ENCODE measurements at regions of chr5 and their contacts with region 1.

Region 1: GRCh38 chr5:131634996-131635754 is at the start of gene RAPGEF6:
- DNase-seq: peak; percentile 84 to 99 (median 97)
- ATAC-seq: peak; percentile 91
- H3K4me3 ChIP-seq: peak within 1 kb of the TSS; percentile 95
- H3K4me3 Mint-ChIP-seq: peak within 1 kb of the TSS in 5 of 10 donors; percentile 95 to 99 (median 97)
- H3K27ac ChIP-seq: peak within 1 kb of the TSS; percentile 98
- H3K27ac Mint-ChIP-seq: peak within 1 kb of the TSS; percentile 88 to 100 (median 99)
- H3K4me1 ChIP-seq: peaks cover 43 to 49% of the 10 kb centered on the region in 2 donors
- H3K4me1 Mint-ChIP-seq: peaks cover 16 to 44% (median 31%) of the 10 kb centered on the region in 7 donors
- H3K27me3 ChIP-seq: no peaks in the 10 kb centered on the region
- H3K27me3 Mint-ChIP-seq: peaks cover 0 to 3% (median 0%) of the 10 kb centered on the region in 5 donors
- total RNA-seq, gene RAPGEF6: 50.9 to 186 (median 114) TPM

Region 2: GRCh38 chr5:131165119-131165727 is 470.0 kb before region 1 on chr5 and contains the start of gene HINT1:
- CTCF ChIA-PET with region 1: no interaction called
- POLR2A ChIA-PET with region 1: no interaction called
- intact Hi-C with region 1: loop called (anchors 1 kb)
- DNase-seq: peak; percentile 86 to 98 (median 93)
- ATAC-seq: peak; percentile 89
- H3K4me3 ChIP-seq: peak within 1 kb of the TSS; percentile 97
- H3K4me3 Mint-ChIP-seq: peak within 1 kb of the TSS; percentile 93 to 98 (median 97)
- H3K27ac ChIP-seq: peak within 1 kb of the TSS; percentile 91
- H3K27ac Mint-ChIP-seq: peak within 1 kb of the TSS; percentile 95 to 99 (median 98)
- H3K4me1 ChIP-seq: peaks cover 15 to 23% of the 10 kb centered on the region in 2 donors
- H3K4me1 Mint-ChIP-seq: peaks cover 28 to 74% (median 61%) of the 10 kb centered on the region in 7 donors
- H3K27me3 ChIP-seq: no peaks in the 10 kb centered on the region
- H3K27me3 Mint-ChIP-seq: no peaks in the 10 kb centered on the region
- total RNA-seq, gene HINT1: 172 to 319 (median 233) TPM

Region 3: DNA sequence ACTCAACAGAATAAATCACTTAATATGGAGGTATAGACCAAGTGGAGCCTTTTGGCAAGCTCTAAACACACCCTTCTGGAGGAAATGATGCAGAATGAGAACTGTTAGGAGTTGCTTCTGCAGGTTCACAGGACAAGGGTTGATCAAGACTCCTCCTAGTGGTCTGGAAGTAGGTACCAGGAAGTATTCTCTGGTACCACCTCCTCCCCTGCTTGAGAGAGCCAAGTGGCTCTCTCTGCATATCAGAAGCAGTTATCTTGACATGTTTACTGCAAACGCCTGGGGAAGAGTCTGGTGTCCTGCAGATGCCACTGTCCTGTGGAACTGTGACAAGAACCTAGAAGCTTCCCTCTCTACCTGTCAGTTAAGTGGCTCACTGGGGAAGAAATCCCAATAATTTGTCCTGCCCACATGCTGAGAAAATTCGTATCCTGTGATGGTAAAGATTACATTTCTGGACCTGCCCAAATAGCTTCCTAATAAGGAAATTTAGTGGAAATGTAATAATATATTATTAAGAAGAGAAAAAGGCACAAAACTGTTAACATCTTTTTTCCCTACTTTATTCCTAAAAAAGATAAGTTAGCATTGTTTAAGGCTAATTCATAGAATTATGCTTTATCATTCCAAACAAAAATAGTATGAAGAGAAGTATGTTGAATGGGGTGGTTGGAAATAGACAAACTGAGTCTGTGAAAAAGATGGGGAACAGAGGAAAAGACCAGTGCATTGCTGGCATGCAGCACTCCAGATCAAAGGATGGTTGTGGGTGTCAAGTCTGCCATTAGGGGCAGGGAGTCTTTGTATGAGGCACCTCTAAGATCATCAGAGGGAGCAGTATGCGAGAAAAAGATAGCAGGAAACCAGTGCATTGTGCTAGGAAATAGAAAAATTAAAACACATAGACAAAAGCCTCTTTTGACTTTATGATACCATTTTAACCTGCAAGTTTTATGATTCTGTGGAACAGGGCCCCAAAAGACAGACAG is 252.5 kb before region 1 on chr5:
- CTCF ChIA-PET with region 1: no interaction called
- POLR2A ChIA-PET with region 1: no interaction called
- intact Hi-C with region 1: loop called in 1 of 2 experiments (anchors 5 kb)
- DNase-seq: peak in 8 of 9 donors; percentile 43 to 88 (median 82)
- ATAC-seq: peak; percentile 81
- H3K4me3 ChIP-seq: no peak overlapping the region
- H3K4me3 Mint-ChIP-seq: peak overlapping the region; percentile 40 to 86 (median 72)
- H3K27ac ChIP-seq: peak overlapping the region; percentile 97
- H3K27ac Mint-ChIP-seq: peak overlapping the region; percentile 94 to 99 (median 98)
- H3K4me1 ChIP-seq: peaks cover 74 to 76% of the 10 kb centered on the region in 2 donors
- H3K4me1 Mint-ChIP-seq: peaks cover 41 to 100% (median 92%) of the 10 kb centered on the region in 7 donors
- H3K27me3 ChIP-seq: no peaks in the 10 kb centered on the region
- H3K27me3 Mint-ChIP-seq: no peaks in the 10 kb centered on the region

Region 4: GRCh38 chr5:131589510-131590348 is 45.4 kb before region 1 on chr5:
- CTCF ChIA-PET with region 1: interaction called, 5 read pairs
- POLR2A ChIA-PET with region 1: interaction called, 11 read pairs
- intact Hi-C with region 1: loop called (anchors 1 kb)
- DNase-seq: peak in 8 of 9 donors; percentile 8 to 71 (median 62)
- ATAC-seq: peak; percentile 80
- H3K4me3 ChIP-seq: no peak overlapping the region
- H3K4me3 Mint-ChIP-seq: no peak overlapping the region
- H3K27ac ChIP-seq: peak overlapping the region; percentile 9
- H3K27ac Mint-ChIP-seq: peak overlapping the region; percentile 10 to 75 (median 52)
- H3K4me1 ChIP-seq: peaks cover 4 to 5% of the 10 kb centered on the region in 2 donors
- H3K4me1 Mint-ChIP-seq: peaks cover 21 to 63% (median 58%) of the 10 kb centered on the region in 7 donors
- H3K27me3 ChIP-seq: no peaks in the 10 kb centered on the region
- H3K27me3 Mint-ChIP-seq: no peaks in the 10 kb centered on the region

Region 5: DNA sequence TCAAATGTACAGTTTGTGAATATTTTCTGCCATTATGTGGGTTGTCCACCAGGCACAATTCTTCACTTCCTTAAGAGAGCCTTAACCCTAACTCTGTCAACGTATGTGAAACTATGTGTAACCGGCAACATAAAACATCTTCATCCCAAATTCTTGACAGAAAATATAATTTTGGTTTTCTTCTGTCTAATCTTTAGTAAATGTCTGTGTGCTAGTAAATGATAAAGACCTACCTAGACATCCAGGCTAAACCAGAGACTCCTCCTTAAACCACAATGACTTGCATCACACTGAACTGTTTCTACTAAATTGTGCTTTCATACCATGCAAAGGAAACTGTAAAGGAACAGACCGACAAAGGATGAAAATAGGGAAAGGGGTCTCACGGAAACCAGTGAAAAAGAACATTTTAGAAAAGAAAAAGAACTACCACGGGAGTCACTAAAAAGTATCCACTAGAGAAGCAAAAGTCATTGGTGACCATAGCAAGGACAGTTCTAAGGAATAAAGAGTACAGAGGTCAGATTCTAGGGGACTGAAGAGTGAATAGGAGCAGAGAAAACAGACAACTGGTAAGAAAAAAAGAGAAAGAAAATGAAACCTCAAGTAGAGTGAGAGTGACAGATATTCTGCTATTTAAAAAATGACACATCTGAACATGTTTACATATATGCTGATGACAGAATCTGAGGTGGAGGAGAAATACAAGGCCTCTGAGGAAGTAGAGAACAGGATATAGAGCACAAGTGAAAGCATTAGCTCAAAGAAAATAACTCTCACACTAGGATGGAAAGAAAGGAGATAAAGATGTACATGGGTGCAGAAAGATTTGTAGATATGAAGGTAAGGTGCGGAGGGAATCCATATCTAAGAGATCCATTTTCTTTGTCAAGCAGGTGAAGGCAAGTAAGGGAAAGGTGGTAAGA is 112.3 kb after region 1 on chr5:
- CTCF ChIA-PET with region 1: no interaction called
- POLR2A ChIA-PET with region 1: no interaction called
- intact Hi-C with region 1: loop called (anchors 1 to 2 kb)
- DNase-seq: peak in 7 of 9 donors; percentile 21 to 64 (median 48)
- ATAC-seq: peak; percentile 80
- H3K4me3 ChIP-seq: no peak overlapping the region
- H3K4me3 Mint-ChIP-seq: peak overlapping the region; percentile 14 to 80 (median 68)
- H3K27ac ChIP-seq: peak overlapping the region; percentile 63
- H3K27ac Mint-ChIP-seq: peak overlapping the region; percentile 84 to 96 (median 89)
- H3K4me1 ChIP-seq: peaks cover 10 to 11% of the 10 kb centered on the region in 2 donors
- H3K4me1 Mint-ChIP-seq: peaks cover 28 to 57% (median 51%) of the 10 kb centered on the region in 7 donors
- H3K27me3 ChIP-seq: no peaks in the 10 kb centered on the region
- H3K27me3 Mint-ChIP-seq: no peaks in the 10 kb centered on the region

Region 6: DNA sequence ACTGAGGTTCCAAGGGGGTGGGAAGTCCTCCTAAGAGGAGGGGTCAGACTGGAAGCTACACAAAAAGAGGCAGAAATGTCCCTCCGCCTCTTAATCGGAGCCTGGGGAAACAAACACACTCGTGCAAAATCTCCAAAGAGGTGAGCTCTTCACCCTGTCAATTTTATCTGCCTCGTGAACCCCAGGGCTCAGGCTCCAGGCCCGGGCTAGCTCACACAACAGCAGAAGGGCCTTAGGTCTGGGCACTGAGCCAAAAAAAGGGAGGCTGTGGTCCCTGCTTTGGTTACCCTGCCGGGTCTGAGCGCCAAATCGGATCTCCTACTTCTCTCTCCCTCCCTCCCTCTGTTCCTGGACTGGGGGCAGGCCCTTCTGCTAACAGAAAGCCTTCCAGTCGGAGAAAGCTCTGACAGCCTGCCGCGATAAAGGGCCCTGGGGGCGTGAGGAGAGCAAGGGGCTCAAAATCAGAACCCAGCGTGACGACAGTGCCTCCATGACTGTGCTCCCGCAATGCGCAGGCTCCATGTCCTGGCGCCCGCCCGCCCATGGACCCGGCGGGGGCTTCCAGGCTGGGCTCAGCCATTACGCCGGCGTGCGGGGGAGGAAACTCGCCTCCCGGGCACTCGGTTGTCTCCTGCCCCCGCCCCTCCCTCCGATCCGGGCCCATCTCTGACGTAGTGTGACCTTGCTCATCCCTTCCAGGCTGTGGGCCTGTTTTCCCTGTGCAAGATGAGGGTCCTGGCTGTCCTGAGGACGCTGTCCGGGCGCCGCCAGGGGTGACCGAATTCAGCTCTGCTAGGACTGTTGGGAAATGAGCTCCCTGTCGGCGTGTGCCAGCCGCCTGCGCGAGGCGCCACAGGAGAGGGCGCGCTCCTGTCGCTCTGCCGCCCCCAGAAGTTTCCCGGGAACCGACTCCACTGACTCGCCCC is 658.2 kb after region 1 on chr5:
- CTCF ChIA-PET with region 1: no interaction called
- POLR2A ChIA-PET with region 1: no interaction called
- intact Hi-C with region 1: loop called (anchors 1 to 5 kb)
- DNase-seq: peak; percentile 8 to 79 (median 35)
- ATAC-seq: peak; percentile 54
- H3K4me3 ChIP-seq: peak overlapping the region; percentile 69
- H3K4me3 Mint-ChIP-seq: peak overlapping the region; percentile 80 to 95 (median 90)
- H3K27ac ChIP-seq: peak overlapping the region; percentile 43
- H3K27ac Mint-ChIP-seq: peak overlapping the region in 3 of 9 donors; percentile 36 to 75 (median 43)
- H3K4me1 ChIP-seq: peaks cover 0 to 8% of the 10 kb centered on the region in 2 donors
- H3K4me1 Mint-ChIP-seq: peaks cover 5 to 26% (median 9%) of the 10 kb centered on the region in 7 donors
- H3K27me3 ChIP-seq: no peaks in the 10 kb centered on the region
- H3K27me3 Mint-ChIP-seq: peaks cover 9 to 32% (median 19%) of the 10 kb centered on the region in 5 donors

Region 7: GRCh38 chr5:132866342-132867045 is 1231.3 kb after region 1 on chr5 and contains the starts of genes GDF9 and UQCRQ:
- CTCF ChIA-PET with region 1: no interaction called
- POLR2A ChIA-PET with region 1: no interaction called
- intact Hi-C with region 1: loop called in 1 of 2 experiments (anchors 2 kb)
- DNase-seq: peak; percentile 72 to 97 (median 93)
- ATAC-seq: peak; percentile 99
- H3K4me3 ChIP-seq: peak within 1 kb of the TSS; percentile 98
- H3K4me3 Mint-ChIP-seq: peak within 1 kb of the TSS; percentile 98 to 100 (median 100)
- H3K27ac ChIP-seq: peak within 1 kb of the TSS; percentile 96
- H3K27ac Mint-ChIP-seq: peak within 1 kb of the TSS; percentile 97 to 100 (median 100)
- H3K4me1 ChIP-seq: peaks cover 7 to 12% of the 10 kb centered on the region in 2 donors
- H3K4me1 Mint-ChIP-seq: peaks cover 11 to 36% (median 27%) of the 10 kb centered on the region in 7 donors
- H3K27me3 ChIP-seq: no peaks in the 10 kb centered on the region
- H3K27me3 Mint-ChIP-seq: peaks cover 0 to 8% (median 0%) of the 10 kb centered on the region in 5 donors
- total RNA-seq, gene GDF9: 0.48 to 2.0 (median 1.6) TPM
- total RNA-seq, gene UQCRQ: 101 to 338 (median 110) TPM

Measured in naive thymus-derived CD4-positive, alpha-beta T cell (primary cell).